ENCODE measurements at regions of chr11 and their contacts with region 1.

Region 1: GRCh38 chr11:75532200-75533048 is 6.7 kb upstream of the GDPD5 start:
- DNase-seq: no peak
- H3K4me3 ChIP-seq: no peak overlapping the region
- CTCF ChIP-seq: peak; percentile 76

Region 2: GRCh38 chr11:75351791-75352587 is 180.4 kb before region 1 on chr11:
- CTCF ChIA-PET with region 1: no interaction called
- POLR2A ChIA-PET with region 1: no interaction called
- DNase-seq: no peak
- H3K4me3 ChIP-seq: peak overlapping the region; percentile 70
- CTCF ChIP-seq: peak; percentile 20

Region 3: GRCh38 chr11:75399344-75400145 is 132.9 kb before region 1 on chr11 and contains the start of gene RPS3:
- CTCF ChIA-PET with region 1: interaction called, 122 read pairs
- POLR2A ChIA-PET with region 1: no interaction called
- DNase-seq: peak; percentile 50
- H3K4me3 ChIP-seq: peak within 1 kb of the TSS; percentile 97
- CTCF ChIP-seq: peak; percentile 6

Region 4: GRCh38 chr11:75413864-75414263 is 118.6 kb before region 1 on chr11:
- CTCF ChIA-PET with region 1: interaction called, 122 read pairs
- POLR2A ChIA-PET with region 1: no interaction called
- DNase-seq: no peak
- H3K4me3 ChIP-seq: no peak overlapping the region
- CTCF ChIP-seq: no peak

Region 5: GRCh38 chr11:75468534-75469340 is 63.7 kb before region 1 on chr11:
- CTCF ChIA-PET with region 1: interaction called, 14 read pairs
- POLR2A ChIA-PET with region 1: no interaction called
- DNase-seq: no peak
- H3K4me3 ChIP-seq: no peak overlapping the region
- CTCF ChIP-seq: no peak

Region 6: DNA sequence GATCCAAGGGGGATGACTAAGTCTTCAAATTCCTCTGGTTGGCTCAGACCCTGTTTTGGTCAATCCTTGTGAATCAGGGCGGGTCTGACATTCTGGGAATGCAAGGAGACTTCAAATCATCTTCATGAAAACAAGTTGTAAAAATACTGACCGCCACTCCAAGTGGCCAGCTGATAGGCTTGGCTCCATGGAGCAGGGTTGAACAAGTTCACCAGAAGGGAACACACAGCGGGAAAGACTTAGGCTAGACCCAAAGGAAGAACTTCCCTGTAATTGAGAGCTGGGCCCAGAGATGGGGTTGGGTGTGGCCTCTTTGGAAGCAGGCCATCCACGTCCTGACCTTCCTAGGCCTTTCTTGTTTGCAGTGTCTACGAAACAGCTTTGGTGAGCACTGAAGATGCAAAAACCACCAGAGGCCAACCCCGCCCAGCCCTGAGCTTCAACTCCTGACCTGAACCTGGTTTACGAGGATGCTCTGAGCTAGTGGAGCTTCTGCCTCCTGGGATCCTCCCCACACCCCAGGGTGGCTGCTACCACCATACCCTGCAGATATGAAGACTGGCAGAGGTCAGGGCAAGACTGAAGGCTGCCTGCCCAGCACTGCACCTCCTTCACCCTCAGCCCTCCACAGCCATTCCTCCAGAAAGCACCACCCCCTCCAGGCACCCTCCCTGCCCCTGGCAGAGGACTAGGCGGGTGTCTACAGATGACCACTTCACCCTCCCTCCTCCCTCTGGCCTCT is 32.8 kb before region 1 on chr11:
- CTCF ChIA-PET with region 1: interaction called, 12 read pairs
- POLR2A ChIA-PET with region 1: no interaction called
- DNase-seq: peak; percentile 91
- H3K4me3 ChIP-seq: no peak overlapping the region
- CTCF ChIP-seq: no peak

Region 7: GRCh38 chr11:75520688-75521087 is 11.7 kb before region 1 on chr11:
- CTCF ChIA-PET with region 1: interaction called, 75 read pairs
- POLR2A ChIA-PET with region 1: no interaction called
- DNase-seq: no peak
- H3K4me3 ChIP-seq: no peak overlapping the region
- CTCF ChIP-seq: no peak

Region 8: DNA sequence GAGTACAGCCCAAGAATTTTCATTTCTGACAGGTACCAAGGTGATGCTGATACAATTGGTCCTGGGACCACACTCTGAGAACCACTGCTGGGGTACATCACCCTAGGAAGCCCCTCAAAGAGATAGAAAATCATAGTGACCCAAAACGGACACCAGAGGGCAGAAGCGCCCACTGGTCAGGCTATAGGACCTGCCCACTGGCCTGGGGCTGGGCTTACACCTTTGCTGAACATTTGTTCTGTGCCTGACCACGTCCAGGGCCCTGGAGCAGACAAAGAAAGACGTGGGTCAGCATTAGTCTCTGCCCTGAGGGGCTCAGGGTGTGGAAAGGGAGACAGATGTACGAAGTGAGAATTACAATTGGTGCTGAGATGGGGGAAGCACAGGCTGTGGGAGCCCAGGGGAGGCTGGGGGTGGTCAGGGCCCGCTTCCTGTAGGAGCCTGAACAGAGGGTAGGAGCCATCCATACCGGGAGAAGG is 15.2 kb after region 1 on chr11:
- CTCF ChIA-PET with region 1: interaction called, 47 read pairs
- POLR2A ChIA-PET with region 1: no interaction called
- DNase-seq: no peak
- H3K4me3 ChIP-seq: no peak overlapping the region
- CTCF ChIP-seq: peak; percentile 72

Region 9: DNA sequence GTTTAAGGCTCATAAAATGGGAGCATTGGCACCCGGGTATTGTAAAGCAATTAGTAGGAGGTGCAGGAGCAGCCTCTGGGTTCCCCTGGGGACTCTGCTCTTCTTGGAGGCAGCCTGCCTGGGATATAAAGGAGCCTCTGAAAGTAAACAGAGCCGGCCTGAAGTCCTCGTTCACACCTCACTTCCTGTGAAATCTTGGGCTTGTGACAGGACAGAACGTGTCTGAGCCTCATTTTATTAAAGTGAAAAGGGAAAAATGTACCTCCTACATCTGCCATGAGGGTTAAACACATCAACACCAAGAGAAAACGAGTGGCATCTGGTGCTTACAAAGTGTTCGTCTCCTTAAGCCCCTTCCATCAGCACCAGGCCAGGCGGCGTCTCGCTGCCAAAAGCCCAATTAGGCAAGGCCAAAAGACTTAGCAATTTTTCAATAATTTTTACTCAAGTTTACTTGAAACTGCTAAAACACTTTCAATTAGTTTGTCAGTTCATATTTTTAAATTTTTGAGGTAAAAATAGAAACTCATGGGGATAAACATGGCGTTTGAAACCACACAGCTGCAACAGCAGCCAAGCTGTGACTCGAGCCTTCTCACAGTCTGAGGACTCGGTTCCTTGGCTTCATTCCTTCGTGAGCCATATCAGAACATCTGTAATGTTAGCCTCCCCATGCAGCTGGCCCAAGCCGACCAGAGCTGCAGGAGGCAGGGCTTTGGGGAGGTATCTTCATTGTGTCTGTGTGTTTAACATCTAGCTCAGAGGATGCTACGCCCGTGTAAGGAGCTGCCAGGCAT is 102.8 kb after region 1 on chr11:
- CTCF ChIA-PET with region 1: no interaction called
- POLR2A ChIA-PET with region 1: no interaction called
- DNase-seq: no peak
- H3K4me3 ChIP-seq: no peak overlapping the region
- CTCF ChIP-seq: no peak

Measured in AG04449 (cell line).